ENCODE measurements at regions of chr7 and their contacts with region 1.

Region 1: GRCh38 chr7:106736508-106737201 is 75.7 kb upstream of the CCDC71L start:
- DNase-seq: peak; percentile 30
- H3K4me3 ChIP-seq: no peak overlapping the region
- H3K27ac ChIP-seq: peak overlapping the region; percentile 38 to 56; a peak in 3 of 4 replicates
- H3K4me1 ChIP-seq: peaks cover 4 to 5% of the 10 kb centered on the region in 2 experiments; a peak in 3 of 4 replicates
- H3K27me3 ChIP-seq: no peaks in the 10 kb centered on the region
- CTCF ChIP-seq: peak; percentile 69
- EP300 ChIP-seq: no peak
- RAD21 ChIP-seq: peak; percentile 75

Region 2: GRCh38 chr7:106542550-106543220 is 194.0 kb before region 1 on chr7:
- CTCF ChIA-PET with region 1: interaction called, 37 read pairs
- POLR2A ChIA-PET with region 1: no interaction called
- DNase-seq: peak; percentile 65
- H3K4me3 ChIP-seq: no peak overlapping the region; a peak in 1 of 4 replicates
- H3K27ac ChIP-seq: peak overlapping the region; percentile 48 to 78; a peak in 3 of 4 replicates
- H3K4me1 ChIP-seq: peaks cover 21 to 26% of the 10 kb centered on the region in 2 experiments; a peak in 3 of 4 replicates
- H3K27me3 ChIP-seq: no peaks in the 10 kb centered on the region
- CTCF ChIP-seq: peak; percentile 97
- EP300 ChIP-seq: no peak
- RAD21 ChIP-seq: peak; percentile 83

Measured in SK-N-SH (cell line).